RWPE1 (cell line): ENCODE measurements at regions of chr9 and their contacts with region 1.

Region 1: DNA sequence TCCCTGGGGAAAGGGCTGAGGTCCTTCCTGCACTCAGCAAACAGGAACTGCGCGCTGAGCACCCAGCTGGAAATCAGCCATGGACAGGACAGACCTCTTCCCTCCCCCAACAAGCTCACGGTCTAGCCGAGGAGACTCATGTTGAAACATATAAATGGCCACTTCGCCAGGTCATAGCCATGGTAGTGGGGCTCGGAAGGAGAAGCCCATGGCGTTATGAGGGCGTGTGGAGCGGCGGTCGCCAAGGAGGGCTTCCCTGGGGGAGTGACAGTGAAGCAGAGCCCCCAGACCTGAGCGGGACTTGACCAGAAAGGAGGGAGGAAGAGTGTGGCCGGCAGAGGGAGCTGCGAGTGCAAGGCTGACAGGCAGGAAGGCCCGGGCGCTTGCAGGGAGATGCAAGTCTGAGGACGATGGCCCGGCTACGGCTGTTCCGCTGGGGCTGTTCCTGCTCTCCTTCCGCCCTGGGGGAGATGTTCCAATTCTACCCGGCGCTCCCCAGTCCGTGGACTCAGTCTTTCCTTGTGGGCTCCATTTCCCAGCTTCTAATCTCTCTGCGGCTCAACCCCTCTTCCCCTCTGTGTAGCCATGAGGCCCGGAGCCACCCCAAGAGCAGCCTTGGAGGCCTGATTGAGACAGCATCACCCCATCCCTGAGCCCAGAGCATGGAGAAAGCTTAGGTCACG is 43.9 kb upstream of the PRRC2B start:
- DNase-seq: peak; percentile 90
- H3K27ac ChIP-seq: no peak overlapping the region
- CTCF ChIP-seq: peak; percentile 99

Region 2: DNA sequence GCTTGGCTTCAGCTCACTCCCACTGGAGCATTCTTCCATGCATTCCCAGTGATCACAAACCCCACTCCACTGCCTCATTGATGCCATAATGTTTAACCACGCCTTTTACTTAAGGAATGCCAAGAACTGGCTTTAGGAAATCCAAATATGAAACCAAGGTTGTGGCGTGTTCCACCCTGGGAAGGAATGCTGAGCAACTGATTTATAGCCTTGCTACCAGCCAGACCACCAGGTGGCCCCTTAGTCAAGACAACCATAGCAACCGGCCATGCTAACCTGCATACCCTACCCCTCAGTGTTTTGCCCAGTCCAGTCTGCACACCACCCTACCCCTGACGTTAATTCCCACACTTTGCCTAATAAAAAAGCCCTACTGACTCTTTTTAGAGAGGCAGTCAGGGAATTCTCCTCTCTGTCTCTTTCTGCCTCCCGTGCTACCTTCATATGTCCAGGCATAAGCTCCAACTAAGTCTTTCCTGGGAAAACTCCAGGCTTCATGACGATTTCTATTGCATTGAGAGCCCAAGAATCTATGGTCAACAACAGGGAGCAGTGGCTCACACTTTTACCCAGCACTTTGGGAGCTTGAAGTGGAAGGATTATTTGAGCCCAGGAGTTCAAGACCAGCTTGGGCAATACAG is 16.9 kb after region 1 on chr9:
- CTCF ChIA-PET with region 1: interaction called, 14 read pairs
- POLR2A ChIA-PET with region 1: no interaction called
- DNase-seq: peak; percentile 83
- H3K27ac ChIP-seq: peak overlapping the region; percentile 73
- CTCF ChIP-seq: peak; percentile 65

Region 3: GRCh38 chr9:131407717-131408195 is 57.7 kb after region 1 on chr9:
- CTCF ChIA-PET with region 1: interaction called, 12 read pairs
- POLR2A ChIA-PET with region 1: no interaction called
- DNase-seq: peak; percentile 55
- H3K27ac ChIP-seq: peak overlapping the region; percentile 59
- CTCF ChIP-seq: no peak; the same call in 1 of the 2 replicates

Region 4: GRCh38 chr9:131480234-131480633 is 130.2 kb after region 1 on chr9:
- CTCF ChIA-PET with region 1: interaction called, 13 read pairs
- POLR2A ChIA-PET with region 1: no interaction called
- DNase-seq: peak; percentile 65
- H3K27ac ChIP-seq: no peak overlapping the region
- CTCF ChIP-seq: no peak